Vagina (tissue), 2 donors: ENCODE measurements at regions of chr20 and their contacts with region 1.

Region 1: GRCh38 chr20:40144581-40144980 is 544.5 kb downstream of the MAFB start:
- DNase-seq: no peak
- H3K4me3 ChIP-seq: no peak overlapping the region
- H3K27ac ChIP-seq: no peak overlapping the region
- H3K4me1 ChIP-seq: no peaks in the 10 kb centered on the region
- H3K27me3 ChIP-seq: no peaks in the 10 kb centered on the region
- CTCF ChIP-seq: no peak
- POLR2A ChIP-seq: no peak

Region 2: DNA sequence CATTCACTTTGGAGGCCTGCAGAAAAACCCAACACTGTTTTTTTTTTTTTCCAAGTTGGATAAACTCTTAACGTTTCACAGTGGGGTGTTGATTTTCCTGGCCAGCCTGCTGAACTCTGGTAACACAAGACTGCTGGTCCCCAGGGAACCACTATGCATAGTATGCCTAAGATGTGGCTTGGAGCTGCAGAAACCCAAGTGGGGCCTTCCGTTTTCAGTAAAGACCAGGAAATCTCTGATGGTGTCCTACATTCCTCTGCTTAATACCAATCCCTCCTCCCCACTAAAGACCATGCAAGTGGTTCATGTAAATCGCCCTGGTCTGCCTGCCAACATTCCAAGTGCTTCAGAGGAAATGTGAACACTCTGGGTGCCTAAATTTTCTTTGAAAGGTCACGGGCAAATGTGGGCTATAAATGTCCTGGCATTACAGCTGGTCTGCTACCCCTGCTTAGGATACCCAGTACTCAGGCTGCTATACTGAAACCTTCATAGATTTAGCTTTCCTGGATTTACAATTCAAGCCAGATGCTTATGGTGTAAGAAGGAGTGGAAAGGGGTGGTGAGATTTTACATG is 71.0 kb before region 1 on chr20:
- intact Hi-C with region 1: loop called (anchors 2 kb)
- DNase-seq: no peak
- H3K4me3 ChIP-seq: no peak overlapping the region
- H3K27ac ChIP-seq: no peak overlapping the region
- H3K4me1 ChIP-seq: no peaks in the 10 kb centered on the region
- H3K27me3 ChIP-seq: no peaks in the 10 kb centered on the region
- CTCF ChIP-seq: no peak
- POLR2A ChIP-seq: no peak